ENCODE measurements at regions of chr17 and their contacts with region 1.

Region 1: DNA sequence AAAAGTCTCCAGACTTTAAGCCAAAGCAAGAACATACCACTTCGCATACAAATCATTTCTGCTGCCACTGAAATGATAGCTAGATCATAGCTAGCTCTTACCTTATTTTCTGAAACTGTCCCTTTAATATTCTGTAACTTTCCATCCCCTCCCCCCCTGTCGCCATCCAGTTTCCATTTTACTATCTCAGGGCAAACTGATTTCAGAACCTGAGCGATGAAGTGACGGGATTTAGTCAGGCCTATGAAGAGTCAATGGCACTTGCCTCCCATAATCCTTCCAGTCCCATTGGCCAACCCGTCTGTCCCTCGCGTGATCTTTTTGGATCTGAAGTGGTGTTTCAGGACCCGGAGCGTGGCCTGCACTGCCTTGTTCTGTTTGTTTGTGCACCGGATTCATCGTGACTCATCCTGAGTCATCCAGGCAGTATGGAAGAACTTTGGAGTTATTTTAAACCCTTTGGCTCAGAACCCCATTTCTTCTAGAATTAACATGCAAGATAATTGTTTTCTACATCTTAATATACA is 199.8 kb upstream of the CHMP6 start:
- DNase-seq: peak; percentile 98
- H3K4me3 ChIP-seq: no peak overlapping the region
- H3K27ac ChIP-seq: peak overlapping the region; percentile 99
- H3K4me1 ChIP-seq: peaks cover 61% of the 10 kb centered on the region
- H3K27me3 ChIP-seq: no peaks in the 10 kb centered on the region
- CTCF ChIP-seq: no peak
- POLR2A ChIP-seq: no peak

Region 2: GRCh38 chr17:80761110-80761871 is 30.5 kb before region 1 on chr17:
- CTCF ChIA-PET with region 1: interaction called, 4 read pairs
- POLR2A ChIA-PET with region 1: no interaction called
- dilution Hi-C with region 1: no loop called
- intact Hi-C with region 1: loop called (anchors 1 kb)
- DNase-seq: peak; percentile 87
- H3K4me3 ChIP-seq: peak overlapping the region in 1 of 3 experiments; percentile 7
- H3K27ac ChIP-seq: peak overlapping the region; percentile 78
- H3K4me1 ChIP-seq: peaks cover 59% of the 10 kb centered on the region
- H3K27me3 ChIP-seq: no peaks in the 10 kb centered on the region
- CTCF ChIP-seq: no peak
- POLR2A ChIP-seq: peak; percentile 49

Region 3: DNA sequence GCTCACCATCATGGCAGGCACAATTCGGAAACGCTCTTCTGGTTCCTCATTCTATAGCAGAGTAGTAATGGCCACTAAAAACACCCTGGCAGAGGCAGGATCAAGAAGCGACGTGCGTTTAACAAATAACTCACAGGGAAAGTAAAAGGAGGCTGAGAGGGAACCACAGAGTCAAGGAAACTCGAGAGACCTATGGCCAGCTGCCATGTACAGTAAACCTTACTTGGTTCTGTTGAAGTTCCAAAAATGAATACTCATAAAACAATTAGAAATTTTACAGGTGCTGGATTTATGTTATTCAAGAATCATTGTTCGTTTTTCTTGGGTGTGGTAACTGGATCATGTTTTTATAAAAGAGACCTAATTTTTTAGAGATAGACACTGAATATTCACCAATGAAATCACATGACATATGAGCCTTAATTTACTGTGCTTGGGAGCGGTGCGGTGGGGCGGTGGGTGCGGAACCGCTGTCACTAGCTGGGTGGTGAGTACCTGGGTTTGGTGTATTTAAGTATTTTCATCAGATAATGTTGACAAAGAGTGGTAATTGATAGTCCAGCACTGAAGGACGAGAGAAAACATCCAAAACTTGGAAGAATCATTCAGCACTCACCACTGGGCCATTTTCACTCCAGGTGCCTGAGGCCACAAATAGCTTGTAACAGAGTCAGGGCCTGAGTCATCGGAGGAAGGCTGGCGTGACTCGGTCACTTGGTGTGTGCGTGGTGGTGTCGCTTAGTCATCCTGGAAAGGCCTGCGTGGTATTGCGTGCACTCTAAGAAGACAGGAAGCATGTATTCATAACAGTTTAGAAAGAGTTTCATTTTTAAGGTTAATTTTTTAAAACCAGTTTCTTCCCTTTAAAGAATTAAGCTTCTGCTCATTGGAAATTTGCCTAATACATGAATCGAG is 64.4 kb after region 1 on chr17:
- CTCF ChIA-PET with region 1: interaction called, 5 read pairs
- POLR2A ChIA-PET with region 1: no interaction called
- dilution Hi-C with region 1: no loop called
- intact Hi-C with region 1: loop called (anchors 1 kb)
- DNase-seq: peak; percentile 95
- H3K4me3 ChIP-seq: no peak overlapping the region
- H3K27ac ChIP-seq: peak overlapping the region; percentile 97
- H3K4me1 ChIP-seq: peaks cover 26% of the 10 kb centered on the region
- H3K27me3 ChIP-seq: no peaks in the 10 kb centered on the region
- CTCF ChIP-seq: no peak
- POLR2A ChIP-seq: no peak

Region 4: GRCh38 chr17:80892019-80892855 is 100.4 kb after region 1 on chr17:
- CTCF ChIA-PET with region 1: no interaction called
- POLR2A ChIA-PET with region 1: no interaction called
- dilution Hi-C with region 1: no loop called
- intact Hi-C with region 1: loop called (anchors 1 kb)
- DNase-seq: peak; percentile 91
- H3K4me3 ChIP-seq: no peak overlapping the region
- H3K27ac ChIP-seq: peak overlapping the region; percentile 79
- H3K4me1 ChIP-seq: peaks cover 28% of the 10 kb centered on the region
- H3K27me3 ChIP-seq: no peaks in the 10 kb centered on the region
- CTCF ChIP-seq: no peak
- POLR2A ChIP-seq: no peak